Activated CD4-positive, alpha-beta T cell treated with anti-CD3 and anti-CD28 coated beads, Interleukin-2, amount 10 ng/mL, durations not matched to agents 7 days and 5 days (primary cell): ENCODE measurements at regions of chr6 and their contacts with region 1.

Region 1: GRCh38 chr6:142833054-142833453 is 111.9 kb downstream of the HIVEP2 start:
- DNase-seq: no peak
- H3K4me3 Mint-ChIP-seq: no peak overlapping the region
- H3K27ac Mint-ChIP-seq: peak overlapping the region; percentile 21
- H3K4me1 Mint-ChIP-seq: peaks cover 55% of the 10 kb centered on the region
- H3K27me3 Mint-ChIP-seq: no peaks in the 10 kb centered on the region

Region 2: GRCh38 chr6:142819603-142820337 is 13.3 kb before region 1 on chr6:
- CTCF ChIA-PET with region 1: interaction called, 46 read pairs
- POLR2A ChIA-PET with region 1: no interaction called
- DNase-seq: peak; percentile 58
- H3K4me3 Mint-ChIP-seq: peak overlapping the region; percentile 77
- H3K27ac Mint-ChIP-seq: peak overlapping the region; percentile 91
- H3K4me1 Mint-ChIP-seq: peaks cover 65% of the 10 kb centered on the region
- H3K27me3 Mint-ChIP-seq: no peaks in the 10 kb centered on the region